Activated CD4-positive, alpha-beta T cell treated with anti-CD3 and anti-CD28 coated beads, Interleukin-2, amount 10 ng/mL, durations not matched to agents 24 days and 14 days (primary cell): ENCODE measurements at regions of chrX and their contacts with region 1.

Region 1: DNA sequence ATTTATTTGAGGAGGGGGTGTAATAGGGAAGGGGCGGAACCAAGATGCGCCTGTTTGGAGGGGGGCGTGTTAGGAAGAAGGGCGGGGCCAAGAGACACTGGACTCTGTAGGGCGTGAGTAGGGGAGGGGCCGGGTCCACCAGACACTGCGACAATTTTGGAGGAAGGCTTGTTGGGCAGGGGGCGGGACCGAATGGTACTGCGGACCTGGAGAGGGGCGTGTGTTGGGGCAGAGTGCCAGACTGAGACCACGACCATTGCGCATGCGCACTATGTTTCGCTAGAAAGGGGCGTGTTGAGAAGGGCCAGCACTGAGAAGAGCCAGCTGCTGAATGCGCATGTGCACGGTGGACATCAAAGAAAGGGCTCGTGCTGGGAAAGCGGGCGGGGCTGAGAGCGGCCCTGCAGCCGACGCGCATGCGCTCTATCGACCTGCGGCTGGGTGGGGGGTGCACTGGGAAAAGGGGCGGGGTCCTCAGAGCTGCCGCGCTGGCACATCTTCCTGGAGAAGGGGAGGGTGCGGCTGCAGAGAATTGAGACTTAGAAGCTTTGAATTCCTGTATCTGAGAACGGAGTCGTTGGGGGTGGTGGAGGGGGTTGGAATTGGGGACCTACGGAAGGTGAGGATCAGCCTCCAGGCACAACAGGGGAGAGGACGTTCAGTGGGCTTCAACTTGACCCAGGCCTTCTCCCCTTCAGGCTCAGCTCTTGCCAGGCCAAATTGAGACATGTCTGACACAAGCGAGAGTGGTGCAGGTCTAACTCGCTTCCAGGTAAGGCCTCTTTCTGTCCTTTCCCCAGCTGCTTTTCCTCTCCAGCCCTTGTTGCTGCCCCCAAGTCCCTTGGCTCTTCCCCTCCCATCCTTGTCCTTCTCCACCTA is 1.3 kb downstream of the MAGED2 start:
- DNase-seq: peak; percentile 96
- H3K4me3 Mint-ChIP-seq: peak overlapping the region; percentile 95
- H3K27ac Mint-ChIP-seq: peak overlapping the region; percentile 92
- H3K4me1 Mint-ChIP-seq: peaks cover 18% of the 10 kb centered on the region
- H3K27me3 Mint-ChIP-seq: peaks cover 20% of the 10 kb centered on the region

Region 2: GRCh38 chrX:54439967-54440871 is 368.6 kb before region 1 on chrX and contains the start of gene TSR2:
- intact Hi-C with region 1: loop called (anchors 5 kb)
- DNase-seq: peak; percentile 93
- H3K4me3 Mint-ChIP-seq: peak within 1 kb of the TSS; percentile 96
- H3K27ac Mint-ChIP-seq: peak within 1 kb of the TSS; percentile 92
- H3K4me1 Mint-ChIP-seq: peaks cover 14% of the 10 kb centered on the region
- H3K27me3 Mint-ChIP-seq: no peaks in the 10 kb centered on the region
- total RNA-seq, gene TSR2: 40.8 and 43.7 TPM in 2 replicates

Region 3: GRCh38 chrX:54529552-54530357 is 279.1 kb before region 1 on chrX and contains the start of gene GNL3L:
- intact Hi-C with region 1: loop called (anchors 2 kb)
- DNase-seq: peak; percentile 92
- H3K4me3 Mint-ChIP-seq: peak within 1 kb of the TSS; percentile 94
- H3K27ac Mint-ChIP-seq: peak within 1 kb of the TSS; percentile 96
- H3K4me1 Mint-ChIP-seq: peaks cover 18% of the 10 kb centered on the region
- H3K27me3 Mint-ChIP-seq: no peaks in the 10 kb centered on the region
- total RNA-seq, gene GNL3L: 78.4 and 78.8 TPM in 2 replicates

Region 4: GRCh38 chrX:54921427-54922021 is 112.7 kb after region 1 on chrX:
- intact Hi-C with region 1: loop called (anchors 1 kb)
- DNase-seq: peak; percentile 82
- H3K4me3 Mint-ChIP-seq: peak overlapping the region; percentile 94
- H3K27ac Mint-ChIP-seq: peak overlapping the region; percentile 58
- H3K4me1 Mint-ChIP-seq: peaks cover 17% of the 10 kb centered on the region
- H3K27me3 Mint-ChIP-seq: peaks cover 10% of the 10 kb centered on the region

Region 5: DNA sequence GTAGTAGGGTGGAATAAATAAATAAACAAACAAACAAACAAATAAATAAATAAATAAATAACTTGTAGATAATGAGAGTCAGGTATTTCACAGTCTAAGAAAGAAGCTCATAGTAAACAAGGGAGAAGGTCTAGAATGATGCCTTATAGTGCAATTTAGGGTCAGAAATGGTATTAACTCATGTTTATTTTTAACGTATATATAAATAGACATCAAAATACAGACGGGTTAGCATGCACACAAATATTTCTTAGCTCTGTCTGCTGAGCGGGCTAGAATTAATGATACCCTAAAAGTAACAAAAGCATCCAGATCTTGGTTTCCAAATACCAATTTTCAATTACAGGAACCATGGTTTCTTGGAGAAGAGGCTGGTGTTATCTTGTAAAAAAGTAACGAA is 168.5 kb after region 1 on chrX:
- intact Hi-C with region 1: no loop called
- DNase-seq: no peak
- H3K4me3 Mint-ChIP-seq: no peak overlapping the region
- H3K27ac Mint-ChIP-seq: no peak overlapping the region
- H3K4me1 Mint-ChIP-seq: no peaks in the 10 kb centered on the region
- H3K27me3 Mint-ChIP-seq: peaks cover 1% of the 10 kb centered on the region

Region 6: DNA sequence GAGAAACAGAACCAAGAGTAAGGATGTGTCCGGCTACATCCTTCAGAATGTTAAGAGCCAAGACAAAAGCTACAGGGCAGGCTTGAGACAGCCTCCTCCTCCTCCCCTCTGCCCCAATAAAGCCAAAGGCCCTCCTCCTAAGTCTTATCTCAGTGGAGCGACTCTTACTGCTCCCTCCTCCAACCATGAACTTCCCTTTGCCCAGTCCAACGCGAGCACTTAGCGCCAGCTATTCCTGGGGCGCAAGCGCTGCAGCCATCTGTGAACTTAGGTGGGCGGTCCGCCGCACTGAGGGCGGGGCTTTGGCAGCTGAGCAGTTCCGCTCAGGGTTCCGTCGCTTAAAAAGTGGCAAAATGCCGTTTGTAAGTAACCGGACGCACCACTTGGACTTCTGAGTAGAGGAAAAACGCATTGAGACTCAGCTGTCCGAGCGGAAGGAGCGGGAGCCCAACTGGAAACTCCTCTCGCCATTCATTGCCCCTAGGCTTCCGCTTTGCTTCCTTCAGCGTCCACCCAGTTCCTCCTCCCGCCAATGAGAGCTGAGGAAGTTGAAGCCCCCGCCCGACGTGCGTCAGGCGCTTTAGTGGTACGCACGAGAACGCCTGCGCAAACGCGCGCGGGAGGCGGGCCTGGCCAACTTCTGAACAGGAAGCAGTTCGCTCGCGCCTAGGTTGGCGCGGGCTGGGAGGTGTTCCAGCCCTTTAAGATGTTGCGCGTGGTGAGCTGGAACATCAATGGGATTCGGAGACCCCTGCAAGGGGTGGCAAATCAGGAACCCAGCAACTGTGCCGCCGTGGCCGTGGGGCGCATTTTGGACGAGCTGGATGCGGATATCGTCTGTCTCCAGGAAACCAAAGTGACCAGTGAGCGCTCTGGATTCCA is 191.1 kb after region 1 on chrX and contains the start of gene APEX2:
- intact Hi-C with region 1: loop called (anchors 1 kb)
- DNase-seq: peak; percentile 96
- H3K4me3 Mint-ChIP-seq: peak within 1 kb of the TSS; percentile 97
- H3K27ac Mint-ChIP-seq: peak within 1 kb of the TSS; percentile 87
- H3K4me1 Mint-ChIP-seq: peaks cover 14% of the 10 kb centered on the region
- H3K27me3 Mint-ChIP-seq: no peaks in the 10 kb centered on the region
- total RNA-seq, gene APEX2: 32.2 and 36.1 TPM in 2 replicates

Region 7: DNA sequence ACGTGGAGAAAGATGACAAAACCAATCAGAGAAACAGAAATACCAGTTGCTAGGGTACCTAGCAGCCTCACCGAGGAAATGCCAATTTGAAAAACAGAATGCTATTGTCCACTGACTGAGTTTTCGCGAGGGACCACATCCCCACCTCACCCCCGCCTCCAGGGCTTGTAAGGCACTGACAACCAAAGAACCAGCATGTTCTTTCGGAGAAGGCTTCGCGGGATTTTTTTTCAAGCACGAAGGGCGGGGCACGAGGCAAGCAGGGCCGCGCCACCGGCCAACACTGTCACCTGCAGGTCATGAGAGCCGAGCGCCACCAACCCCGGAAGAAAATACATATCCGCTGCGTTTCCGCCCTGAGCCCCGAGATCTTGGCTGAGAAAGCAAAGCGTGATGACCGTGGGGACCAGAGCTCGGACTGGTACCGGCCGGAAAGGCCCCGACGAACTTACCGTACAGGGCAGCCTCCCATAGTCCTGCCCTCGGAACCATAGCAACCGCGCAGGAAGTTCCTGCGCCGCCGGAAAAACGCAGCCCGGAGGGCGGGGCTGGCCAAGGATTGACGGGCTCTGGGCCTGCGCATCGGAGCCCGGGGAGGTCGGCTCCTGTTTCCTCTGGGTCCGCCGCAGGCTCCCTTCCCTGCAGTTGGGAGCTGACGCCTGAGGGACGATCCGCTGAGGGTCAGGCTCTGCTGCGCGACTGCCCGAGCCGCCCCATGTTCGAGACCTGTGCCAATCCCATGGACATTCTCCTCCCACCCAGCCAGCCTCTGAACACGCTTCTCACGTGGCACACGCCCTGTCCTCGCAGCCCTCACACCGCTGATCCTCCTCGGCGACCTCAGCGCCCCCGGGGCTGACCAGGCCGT is 352.1 kb after region 1 on chrX:
- intact Hi-C with region 1: loop called (anchors 2 kb)
- DNase-seq: peak; percentile 96
- H3K4me3 Mint-ChIP-seq: peak overlapping the region; percentile 90
- H3K27ac Mint-ChIP-seq: peak overlapping the region; percentile 97
- H3K4me1 Mint-ChIP-seq: peaks cover 10% of the 10 kb centered on the region
- H3K27me3 Mint-ChIP-seq: peaks cover 13% of the 10 kb centered on the region

Region 8: DNA sequence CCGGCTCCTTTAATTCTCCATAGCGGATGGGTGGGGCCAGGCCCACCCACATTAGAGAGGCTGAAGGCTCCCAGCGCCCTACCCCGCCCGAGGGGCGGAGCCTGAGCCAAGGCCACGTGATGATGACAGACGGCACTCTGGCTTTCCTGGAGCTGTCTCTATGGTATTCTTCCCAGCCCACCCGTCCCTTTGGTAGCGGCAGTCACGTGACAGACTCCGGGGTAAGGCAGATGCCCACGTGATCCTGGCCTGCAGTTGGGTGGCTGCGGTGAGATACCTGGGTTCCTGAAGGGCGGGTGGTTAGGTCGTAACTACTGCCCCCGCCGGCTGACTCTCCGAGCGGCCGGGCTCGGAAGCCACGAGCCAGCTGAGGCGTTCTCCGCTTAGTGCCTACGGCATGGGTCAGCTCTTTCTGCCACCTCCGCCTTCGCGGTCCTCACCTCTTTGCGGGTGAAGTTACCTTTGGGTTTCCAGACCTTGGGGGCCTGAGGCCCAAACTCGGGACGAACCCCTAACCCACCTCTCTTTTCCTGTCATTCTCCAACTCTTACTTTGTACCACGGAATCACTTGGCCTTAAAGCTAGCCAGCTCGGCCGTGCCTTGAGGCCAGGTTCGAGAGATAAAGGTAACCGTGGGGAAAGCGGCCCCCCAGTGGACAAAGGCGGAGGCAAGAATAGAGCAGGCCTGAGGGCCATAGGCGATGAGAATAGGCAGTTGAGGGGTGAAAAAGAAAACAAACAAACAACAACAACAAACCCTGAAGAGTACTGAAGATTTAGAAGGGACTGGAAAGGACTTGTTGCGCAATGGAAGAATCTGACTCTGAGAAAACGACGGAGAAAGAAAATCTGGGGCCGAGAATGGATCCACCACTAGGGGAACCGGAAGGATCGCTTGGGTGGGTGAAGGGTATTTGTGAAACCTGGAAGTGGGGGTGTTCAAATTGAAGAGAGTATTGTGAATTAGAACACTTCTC is 909.0 kb after region 1 on chrX and contains the start of gene RRAGB:
- intact Hi-C with region 1: loop called (anchors 5 kb)
- DNase-seq: peak; percentile 96
- H3K4me3 Mint-ChIP-seq: peak within 1 kb of the TSS; percentile 93
- H3K27ac Mint-ChIP-seq: peak within 1 kb of the TSS; percentile 85
- H3K4me1 Mint-ChIP-seq: peaks cover 16% of the 10 kb centered on the region
- H3K27me3 Mint-ChIP-seq: no peaks in the 10 kb centered on the region
- total RNA-seq, gene RRAGB: 6.5 and 8.2 TPM in 2 replicates